KBM-7 (cell line): ENCODE measurements at regions of chr2 and their contacts with region 1.

Region 1: GRCh38 chr2:203446071-203446481 is 89.0 kb downstream of the RAPH1 start:
- DNase-seq: peak; percentile 21

Region 2: DNA sequence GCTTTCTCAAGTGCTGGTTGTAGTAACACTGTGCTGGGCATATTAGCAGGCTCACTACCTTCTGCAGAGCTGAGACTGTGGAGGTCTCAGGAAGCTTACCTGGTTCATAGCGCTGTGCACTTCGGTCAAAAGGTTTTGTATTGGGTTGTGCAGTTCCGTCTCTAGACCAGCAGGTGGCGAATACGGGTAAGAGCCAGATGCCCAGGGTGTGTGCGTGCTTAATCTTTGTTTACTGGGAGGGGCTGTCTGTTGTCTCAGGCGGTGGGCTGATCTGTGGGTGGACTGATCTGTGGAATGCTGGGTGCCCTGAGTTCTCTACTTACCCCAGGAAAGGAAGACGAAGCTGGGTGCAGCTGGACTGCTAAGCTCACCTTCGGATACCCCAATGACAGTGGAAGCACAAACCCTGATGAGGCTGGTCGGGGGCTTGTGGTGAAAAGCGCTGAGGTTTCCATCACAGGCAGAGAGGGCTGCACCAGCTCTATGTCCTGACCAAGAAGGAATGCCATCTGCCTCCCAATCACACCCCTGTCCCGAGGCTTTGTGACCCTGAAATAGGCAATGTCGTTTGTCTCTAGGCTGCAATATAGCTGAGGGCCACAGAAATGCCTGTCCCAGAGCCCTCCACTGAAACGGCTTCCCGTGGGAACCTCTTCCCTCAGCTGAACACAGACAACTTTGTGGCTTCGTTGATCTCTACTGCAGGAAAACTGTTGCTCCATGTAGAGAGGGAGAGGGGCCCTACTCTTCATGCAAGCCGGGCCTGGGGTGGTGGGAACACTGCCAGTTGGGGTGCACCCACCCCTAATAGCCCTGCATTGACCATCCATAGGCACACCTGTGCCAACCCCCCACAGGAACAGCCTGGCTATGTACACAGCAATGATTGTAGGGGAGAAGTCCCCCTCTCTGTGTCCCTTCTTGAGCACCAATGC is 857.2 kb before region 1 on chr2:
- in situ Hi-C with region 1: loop called (anchors 25 kb)
- DNase-seq: peak; percentile 76

Region 3: GRCh38 chr2:203830304-203831055 is 384.4 kb after region 1 on chr2:
- in situ Hi-C with region 1: no loop called
- DNase-seq: no peak